Naive thymus-derived CD8-positive, alpha-beta T cell (primary cell): ENCODE measurements at regions of chr11 and their contacts with region 1.

Region 1: GRCh38 chr11:9613118-9613829 is 39.8 kb downstream of the WEE1 start:
- DNase-seq: peak; percentile 65 to 89 (median 77)
- ATAC-seq: peak; percentile 55 to 58
- H3K4me3 Mint-ChIP-seq: peak overlapping the region; percentile 92 to 99 (median 96)
- H3K27ac Mint-ChIP-seq: peak overlapping the region; percentile 90 to 99 (median 95)
- H3K4me1 Mint-ChIP-seq: peaks cover 14 to 51% (median 20%) of the 10 kb centered on the region in 4 donors
- H3K27me3 Mint-ChIP-seq: peaks cover 0 to 4% (median 0%) of the 10 kb centered on the region in 5 donors

Region 2: DNA sequence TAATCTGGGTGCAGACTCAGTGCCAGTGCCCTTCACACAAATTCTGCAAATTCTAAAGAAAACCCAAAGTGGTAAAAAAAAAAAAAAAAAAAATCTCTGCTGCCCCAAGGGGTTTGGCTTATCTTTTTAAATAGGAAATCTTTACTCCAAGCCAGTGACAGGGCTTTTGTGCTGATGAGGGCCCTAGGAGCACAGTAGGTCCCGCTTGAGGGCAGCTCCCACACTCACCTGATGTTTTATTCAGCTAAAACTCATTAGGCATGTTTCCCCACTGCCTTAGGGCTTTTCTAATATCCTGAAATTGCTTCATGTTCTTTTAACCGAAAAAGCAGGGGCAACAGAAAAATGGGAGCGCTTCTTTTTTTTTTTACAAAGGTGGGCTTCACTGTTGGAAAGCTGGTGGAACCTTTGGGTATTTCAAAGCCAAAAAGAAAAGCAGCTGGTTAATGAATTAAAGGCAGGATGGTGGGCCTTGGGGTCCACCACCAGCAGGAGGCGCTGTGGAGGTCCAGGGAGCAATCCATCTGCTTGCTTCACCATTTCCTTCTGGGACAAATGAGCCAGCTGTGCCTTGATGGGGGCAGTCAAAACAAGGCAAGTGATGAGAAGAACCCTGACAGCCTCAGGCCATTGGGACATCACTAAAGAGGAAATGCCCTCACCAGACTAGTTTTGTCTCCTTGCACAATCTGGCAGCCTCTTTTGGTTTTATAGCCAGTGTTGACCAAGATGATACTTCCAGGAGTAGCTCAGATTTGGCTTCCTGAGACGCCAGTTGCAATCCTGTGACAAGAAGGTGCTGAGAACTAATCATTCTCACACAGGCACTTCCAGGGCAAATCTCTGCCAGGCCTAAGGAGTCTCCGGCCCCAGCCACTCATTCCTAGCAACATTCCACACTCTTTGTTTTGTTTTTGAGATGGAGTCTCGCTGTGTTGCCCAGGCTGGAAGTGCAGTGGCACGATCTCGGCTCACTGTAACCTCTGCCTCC is 78.2 kb before region 1 on chr11:
- POLR2A ChIA-PET with region 1: interaction called, 10 read pairs
- DNase-seq: peak; percentile 42 to 84 (median 68)
- ATAC-seq: peak; percentile 45 to 73
- H3K4me3 Mint-ChIP-seq: no peak overlapping the region
- H3K27ac Mint-ChIP-seq: no peak overlapping the region
- H3K4me1 Mint-ChIP-seq: no peaks in the 10 kb centered on the region
- H3K27me3 Mint-ChIP-seq: no peaks in the 10 kb centered on the region

Region 3: GRCh38 chr11:9573052-9573774 is 40.1 kb before region 1 on chr11 and contains the start of gene WEE1:
- POLR2A ChIA-PET with region 1: interaction called, 10 read pairs
- DNase-seq: peak; percentile 81 to 95 (median 88)
- ATAC-seq: peak; percentile 93 to 94
- H3K4me3 Mint-ChIP-seq: peak within 1 kb of the TSS; percentile 74 to 90 (median 84)
- H3K27ac Mint-ChIP-seq: peak within 1 kb of the TSS in 9 of 10 donors; percentile 37 to 85 (median 62)
- H3K4me1 Mint-ChIP-seq: peaks cover 6 to 36% (median 9%) of the 10 kb centered on the region in 4 donors
- H3K27me3 Mint-ChIP-seq: peaks cover 0 to 22% (median 14%) of the 10 kb centered on the region in 5 donors
- polyA plus RNA-seq, gene WEE1: 0.33 to 5.1 TPM in 2 of 3 donors, not detected in the other

Region 4: DNA sequence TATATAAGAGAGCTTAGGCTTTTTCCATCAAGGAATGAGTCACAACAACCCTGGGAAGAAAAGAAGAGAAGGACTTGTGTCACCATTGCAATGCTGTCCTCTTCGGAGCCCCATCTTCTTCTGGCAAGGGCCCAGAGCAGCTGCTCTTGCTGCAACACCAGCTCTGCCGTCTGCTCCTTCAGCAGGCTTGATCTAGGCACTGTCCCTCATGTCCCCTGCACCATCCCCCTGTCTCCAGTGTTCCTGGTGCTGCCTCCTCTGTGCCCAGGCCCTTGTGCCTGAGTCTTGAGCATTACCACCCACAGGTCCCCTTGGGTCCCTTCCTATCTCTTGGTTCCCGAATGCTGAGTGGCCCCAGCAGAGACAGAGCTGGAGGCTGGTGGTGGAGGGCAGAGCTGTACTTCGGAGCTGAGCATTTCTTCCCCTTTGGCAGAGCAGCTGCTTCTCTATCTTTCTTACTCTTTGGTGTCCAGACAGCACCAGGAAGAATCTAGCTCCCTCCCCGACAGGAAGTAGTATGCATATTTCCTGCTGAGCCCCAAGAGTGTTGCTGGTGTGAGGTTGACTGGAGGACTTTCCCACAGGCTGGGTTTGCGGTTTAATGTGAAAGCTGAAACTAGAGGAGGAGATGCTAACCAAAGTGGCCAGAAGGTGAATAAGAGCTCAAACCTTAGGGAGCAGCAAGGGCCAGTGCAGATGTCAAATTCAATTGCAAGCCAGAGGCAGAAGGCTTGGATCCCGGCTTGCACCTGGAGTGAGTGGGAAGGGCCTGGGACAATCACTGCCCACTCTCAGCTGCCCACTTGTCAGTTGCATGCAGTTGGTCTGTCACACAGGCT is 12.0 kb before region 1 on chr11:
- POLR2A ChIA-PET with region 1: interaction called, 10 read pairs
- DNase-seq: peak in 8 of 10 donors; percentile 5 to 56 (median 26)
- ATAC-seq: peak; percentile 87 to 92
- H3K4me3 Mint-ChIP-seq: peak overlapping the region; percentile 34 to 81 (median 69)
- H3K27ac Mint-ChIP-seq: peak overlapping the region; percentile 44 to 95 (median 89)
- H3K4me1 Mint-ChIP-seq: peaks cover 10 to 29% (median 19%) of the 10 kb centered on the region in 4 donors
- H3K27me3 Mint-ChIP-seq: peaks cover 0 to 8% (median 0%) of the 10 kb centered on the region in 5 donors